Activated CD8-positive, alpha-beta memory T cell treated with anti-CD3 and anti-CD28 coated beads, Interleukin-2, amount 10 ng/mL, durations not matched to agents 7 days and 5 days (primary cell): ENCODE measurements at regions of chr13 and their contacts with region 1.

Region 1: GRCh38 chr13:30978981-30979956 is 46.8 kb downstream of the TEX26 start:
- DNase-seq: peak; percentile 51
- ATAC-seq: no peak
- H3K4me3 Mint-ChIP-seq: no peak overlapping the region
- H3K27ac Mint-ChIP-seq: no peak overlapping the region
- H3K4me1 Mint-ChIP-seq: peaks cover 5% of the 10 kb centered on the region
- H3K27me3 Mint-ChIP-seq: peaks cover 32% of the 10 kb centered on the region

Region 2: DNA sequence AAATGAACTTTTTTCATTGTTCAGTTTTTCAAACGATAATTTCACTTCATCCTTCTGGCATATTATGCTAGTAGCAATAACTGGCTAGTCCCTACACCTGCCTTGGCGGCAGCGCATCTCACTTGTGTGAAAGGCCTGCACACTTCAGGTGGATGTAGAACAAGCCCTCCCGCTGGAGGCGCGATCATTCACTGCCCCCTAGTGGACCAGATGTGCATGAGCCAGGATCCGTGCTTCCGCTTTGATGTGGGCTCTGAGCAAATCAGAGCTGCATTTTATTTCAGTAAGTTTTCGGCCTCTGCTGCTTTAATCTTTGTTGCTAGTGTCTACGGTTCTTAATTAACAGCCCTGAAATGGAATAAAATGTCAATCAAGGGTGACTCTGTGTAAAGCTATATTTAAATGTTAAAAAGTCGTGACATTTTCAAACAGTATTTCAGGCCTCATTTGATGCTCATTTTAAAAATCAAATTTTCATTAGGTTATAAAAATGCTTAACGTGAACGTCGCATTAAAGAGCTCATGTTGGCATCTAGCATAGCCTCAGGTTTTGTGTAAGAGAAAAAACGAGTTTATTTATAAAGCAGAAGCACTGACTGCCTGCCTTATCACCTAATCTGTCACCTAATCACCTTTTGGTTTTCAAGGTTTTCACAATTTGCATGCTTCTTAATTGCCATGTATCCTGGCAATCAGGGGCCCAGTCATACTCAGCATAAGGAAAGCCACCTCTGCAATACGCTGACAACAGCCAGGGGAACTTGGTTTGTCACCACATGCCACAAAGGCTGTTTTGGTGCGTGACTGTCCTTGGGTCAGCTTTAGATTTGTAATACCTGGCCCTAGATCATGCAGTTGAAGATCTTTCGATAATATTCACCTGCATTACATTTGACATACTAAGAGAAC is 65.4 kb after region 1 on chr13:
- CTCF ChIA-PET with region 1: interaction called, 32 read pairs
- DNase-seq: peak; percentile 90
- ATAC-seq: peak; percentile 78
- H3K4me3 Mint-ChIP-seq: no peak overlapping the region
- H3K27ac Mint-ChIP-seq: peak overlapping the region; percentile 84
- H3K4me1 Mint-ChIP-seq: peaks cover 51% of the 10 kb centered on the region
- H3K27me3 Mint-ChIP-seq: peaks cover 18% of the 10 kb centered on the region